ENCODE measurements at regions of chr1 and their contacts with region 1.

Region 1: DNA sequence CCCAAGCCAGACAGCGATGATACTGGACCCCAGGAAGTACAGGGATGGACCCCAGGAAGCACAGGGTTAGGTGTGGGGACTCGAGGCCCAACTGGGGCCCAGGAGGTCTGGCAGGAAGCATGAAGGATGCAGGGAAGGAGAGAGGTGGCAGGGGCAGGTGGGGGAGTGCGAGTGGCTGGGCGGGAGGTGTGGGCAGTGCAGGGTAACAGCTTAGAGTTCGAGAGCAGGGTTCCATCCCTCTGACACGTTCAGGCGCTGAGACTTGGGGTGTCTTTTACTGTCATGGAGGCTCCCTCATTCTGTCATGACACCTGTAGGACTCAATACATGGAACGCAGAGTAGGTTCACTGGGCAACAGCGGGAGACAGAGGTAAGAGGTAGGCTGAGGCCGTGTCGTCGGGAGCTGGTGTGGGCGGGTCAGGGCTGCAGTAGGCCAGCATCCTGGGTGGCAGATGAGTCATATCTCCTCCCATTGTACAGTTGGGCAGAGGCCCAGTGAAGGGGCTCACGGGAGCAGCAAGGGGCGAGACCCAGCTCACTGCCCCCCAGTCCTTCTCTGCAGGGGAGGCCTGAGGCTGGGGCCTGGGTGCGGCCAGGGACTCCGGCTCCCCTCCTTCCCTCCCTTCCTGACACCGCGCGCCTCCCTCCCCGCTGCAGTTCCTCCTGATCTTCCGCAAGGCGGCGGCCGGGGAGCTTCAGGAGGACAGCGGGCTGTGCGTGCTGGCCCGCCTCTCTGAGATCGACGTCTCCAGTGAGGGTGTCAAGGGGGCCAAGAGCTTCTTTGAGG is 11.6 kb upstream of the CTRC start:
- DNase-seq: peak; percentile 14 to 60 (median 22)
- ATAC-seq: no peak
- H3K4me3 ChIP-seq: no peak overlapping the region
- H3K27ac ChIP-seq: peak overlapping the region; percentile 90 to 93 (median 92)
- H3K4me1 ChIP-seq: peaks cover 77% of the 10 kb centered on the region
- H3K27me3 ChIP-seq: no peaks in the 10 kb centered on the region
- CTCF ChIP-seq: no peak
- POLR2A ChIP-seq: no peak

Region 2: GRCh38 chr1:15323351-15323988 is 103.2 kb before region 1 on chr1:
- intact Hi-C with region 1: loop called (anchors 5 kb)
- DNase-seq: peak; percentile 85 to 89 (median 88)
- ATAC-seq: peak; percentile 86
- H3K4me3 ChIP-seq: no peak overlapping the region
- H3K27ac ChIP-seq: peak overlapping the region; percentile 54 to 87 (median 74)
- H3K4me1 ChIP-seq: peaks cover 18% of the 10 kb centered on the region
- H3K27me3 ChIP-seq: no peaks in the 10 kb centered on the region
- CTCF ChIP-seq: peak; percentile 92 to 99 (median 96)
- POLR2A ChIP-seq: no peak

Region 3: DNA sequence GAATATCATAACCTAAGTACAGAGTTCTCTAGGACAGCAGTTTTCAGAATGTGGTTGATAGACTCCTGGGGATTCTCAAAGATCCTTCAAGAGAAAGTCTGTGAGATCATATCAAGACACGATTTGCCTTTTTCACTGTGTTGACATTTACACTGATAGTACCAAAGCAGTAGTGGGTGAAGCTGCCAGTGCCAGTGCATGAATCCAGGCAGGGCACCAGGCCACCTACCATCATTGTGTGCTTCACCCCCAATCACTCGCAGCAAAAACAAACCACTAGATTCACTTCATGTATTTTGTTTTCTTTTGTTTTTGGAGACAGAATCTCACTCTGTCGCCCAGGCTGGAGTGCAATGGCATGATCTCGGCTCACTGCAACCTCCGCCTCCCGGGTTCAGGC is 123.9 kb after region 1 on chr1:
- intact Hi-C with region 1: no loop called
- DNase-seq: no peak
- ATAC-seq: no peak
- H3K4me3 ChIP-seq: no peak overlapping the region
- H3K27ac ChIP-seq: no peak overlapping the region
- H3K4me1 ChIP-seq: no peaks in the 10 kb centered on the region
- H3K27me3 ChIP-seq: no peaks in the 10 kb centered on the region
- CTCF ChIP-seq: no peak
- POLR2A ChIP-seq: no peak

Measured in body of pancreas (tissue), 4 donors.